GM12878 (cell line): ENCODE measurements at regions of chr14 and their contacts with region 1.

Region 1: DNA sequence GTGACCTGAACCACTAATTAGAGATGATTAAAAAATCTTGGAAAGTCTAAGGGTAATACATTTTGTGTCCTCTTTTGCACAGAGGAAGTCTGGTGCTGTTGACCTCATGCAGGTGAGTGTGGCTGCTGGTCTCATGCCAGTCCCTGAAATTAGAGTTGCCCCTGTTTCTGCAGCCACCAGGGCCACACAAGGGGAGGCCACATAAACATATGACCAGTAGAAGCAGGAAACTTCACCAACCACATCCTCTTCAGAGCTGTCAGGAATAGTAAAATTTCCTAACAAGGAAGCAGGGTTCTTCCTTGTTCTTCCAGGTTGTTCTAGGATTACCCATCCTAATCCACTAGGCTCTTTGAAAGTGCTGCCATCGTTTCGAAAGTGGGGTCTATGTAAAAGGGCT is 28.3 kb downstream of the PSMA6 start:
- DNase-seq: no peak
- ATAC-seq: no peak
- H3K4me3 ChIP-seq: no peak overlapping the region
- H3K27ac ChIP-seq: no peak overlapping the region
- H3K4me1 ChIP-seq: no peaks in the 10 kb centered on the region
- H3K27me3 ChIP-seq: no peaks in the 10 kb centered on the region
- CTCF ChIP-seq: no peak
- EP300 ChIP-seq: no peak
- POLR2A ChIP-seq: no peak
- RAD21 ChIP-seq: no peak

Region 2: DNA sequence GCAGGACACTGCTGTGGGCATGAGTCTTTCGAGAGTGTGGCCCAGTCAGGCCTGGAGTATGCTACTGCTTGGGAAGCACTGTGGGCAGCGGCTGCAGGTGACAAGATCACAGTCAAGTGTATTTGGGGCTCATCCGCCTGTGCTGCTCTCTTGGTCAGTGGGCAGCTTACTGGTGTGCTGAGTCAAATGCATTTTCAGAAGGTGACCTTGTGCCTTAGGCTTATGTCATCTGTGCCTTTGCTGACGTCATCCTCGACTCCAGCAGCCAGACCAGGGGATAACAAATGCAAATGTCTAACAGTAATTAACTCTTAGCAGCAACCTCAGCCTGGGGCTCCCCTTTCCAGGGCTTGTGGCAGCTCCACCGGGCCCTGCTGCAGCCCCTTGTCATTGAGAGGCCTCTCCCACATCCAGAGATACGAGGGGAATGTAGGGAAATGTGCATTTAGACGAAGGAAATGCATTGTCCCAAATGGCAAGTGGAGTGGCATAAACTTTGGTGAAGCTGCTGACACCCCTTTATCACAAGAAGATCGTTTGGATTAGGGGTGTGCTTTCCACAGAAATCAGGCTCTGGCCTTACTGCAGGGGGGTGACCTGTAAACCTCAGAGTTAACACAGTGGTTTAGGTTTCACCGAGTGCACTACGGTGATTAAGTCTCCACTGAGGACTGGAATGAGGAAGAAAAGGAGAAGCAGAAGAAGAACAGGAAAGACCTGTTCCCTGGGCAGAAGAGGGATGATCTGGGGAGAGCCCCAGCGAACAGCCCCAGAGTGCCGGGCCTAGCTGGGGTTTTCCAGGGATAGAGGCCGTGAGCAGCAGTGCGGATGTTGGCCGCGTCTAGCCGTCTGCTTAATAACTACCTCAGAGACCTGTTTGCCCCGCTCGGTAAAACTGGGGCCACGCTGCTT is 11.4 kb after region 1 on chr14:
- CTCF ChIA-PET with region 1: interaction called, 5 read pairs
- POLR2A ChIA-PET with region 1: interaction called, 10 read pairs
- RAD21 ChIA-PET with region 1: interaction called, 4 read pairs
- SMC1A ChIA-PET with region 1: interaction called, 4 read pairs
- in situ Hi-C with region 1: no loop called
- intact Hi-C with region 1: no loop called
- DNase-seq: no peak
- ATAC-seq: peak; percentile 82
- H3K4me3 ChIP-seq: no peak overlapping the region
- H3K27ac ChIP-seq: peak overlapping the region; percentile 24
- H3K4me1 ChIP-seq: peaks cover 27% of the 10 kb centered on the region
- H3K27me3 ChIP-seq: no peaks in the 10 kb centered on the region
- CTCF ChIP-seq: no peak
- EP300 ChIP-seq: peak in 1 of 2 experiments; percentile 45; a peak in 1 of 4 replicates
- POLR2A ChIP-seq: no peak
- RAD21 ChIP-seq: 0 out of 2 replicates have a peak, but pooled peaks have one; percentile 2

Region 3: GRCh38 chr14:35385042-35385839 is 64.8 kb after region 1 on chr14:
- CTCF ChIA-PET with region 1: no interaction called
- POLR2A ChIA-PET with region 1: no interaction called
- RAD21 ChIA-PET with region 1: no interaction called
- SMC1A ChIA-PET with region 1: no interaction called
- in situ Hi-C with region 1: no loop called
- intact Hi-C with region 1: no loop called
- DNase-seq: no peak
- ATAC-seq: peak; percentile 19; the same call in 2 of the 3 replicates
- H3K4me3 ChIP-seq: no peak overlapping the region
- H3K27ac ChIP-seq: no peak overlapping the region
- H3K4me1 ChIP-seq: no peaks in the 10 kb centered on the region
- H3K27me3 ChIP-seq: no peaks in the 10 kb centered on the region
- CTCF ChIP-seq: no peak
- EP300 ChIP-seq: no peak
- POLR2A ChIP-seq: no peak
- RAD21 ChIP-seq: no peak